ENCODE measurements at regions of chr1 and their contacts with region 1.

Region 1: GRCh38 chr1:67561704-67562113 is 123.3 kb upstream of the GADD45A start:
- DNase-seq: peak; percentile 87
- H3K4me3 ChIP-seq: no peak overlapping the region
- H3K27ac ChIP-seq: no peak overlapping the region
- H3K4me1 ChIP-seq: peaks cover 10% of the 10 kb centered on the region
- H3K27me3 ChIP-seq: no peaks in the 10 kb centered on the region

Region 2: GRCh38 chr1:66360285-66360724 is 1201.4 kb before region 1 on chr1:
- in situ Hi-C with region 1: no loop called
- DNase-seq: no peak
- H3K4me3 ChIP-seq: no peak overlapping the region
- H3K27ac ChIP-seq: peak overlapping the region; percentile 13
- H3K4me1 ChIP-seq: peaks cover 39% of the 10 kb centered on the region
- H3K27me3 ChIP-seq: no peaks in the 10 kb centered on the region

Region 3: GRCh38 chr1:67685067-67685557 is 123.4 kb after region 1 on chr1 and contains the start of gene GADD45A:
- in situ Hi-C with region 1: loop called (anchors 10 kb)
- DNase-seq: peak; percentile 99
- H3K4me3 ChIP-seq: peak within 1 kb of the TSS; percentile 96
- H3K27ac ChIP-seq: peak within 1 kb of the TSS; percentile 97
- H3K4me1 ChIP-seq: peaks cover 49% of the 10 kb centered on the region
- H3K27me3 ChIP-seq: no peaks in the 10 kb centered on the region
- total RNA-seq, gene GADD45A: 59.4 and 72.8 TPM in 2 replicates

Region 4: DNA sequence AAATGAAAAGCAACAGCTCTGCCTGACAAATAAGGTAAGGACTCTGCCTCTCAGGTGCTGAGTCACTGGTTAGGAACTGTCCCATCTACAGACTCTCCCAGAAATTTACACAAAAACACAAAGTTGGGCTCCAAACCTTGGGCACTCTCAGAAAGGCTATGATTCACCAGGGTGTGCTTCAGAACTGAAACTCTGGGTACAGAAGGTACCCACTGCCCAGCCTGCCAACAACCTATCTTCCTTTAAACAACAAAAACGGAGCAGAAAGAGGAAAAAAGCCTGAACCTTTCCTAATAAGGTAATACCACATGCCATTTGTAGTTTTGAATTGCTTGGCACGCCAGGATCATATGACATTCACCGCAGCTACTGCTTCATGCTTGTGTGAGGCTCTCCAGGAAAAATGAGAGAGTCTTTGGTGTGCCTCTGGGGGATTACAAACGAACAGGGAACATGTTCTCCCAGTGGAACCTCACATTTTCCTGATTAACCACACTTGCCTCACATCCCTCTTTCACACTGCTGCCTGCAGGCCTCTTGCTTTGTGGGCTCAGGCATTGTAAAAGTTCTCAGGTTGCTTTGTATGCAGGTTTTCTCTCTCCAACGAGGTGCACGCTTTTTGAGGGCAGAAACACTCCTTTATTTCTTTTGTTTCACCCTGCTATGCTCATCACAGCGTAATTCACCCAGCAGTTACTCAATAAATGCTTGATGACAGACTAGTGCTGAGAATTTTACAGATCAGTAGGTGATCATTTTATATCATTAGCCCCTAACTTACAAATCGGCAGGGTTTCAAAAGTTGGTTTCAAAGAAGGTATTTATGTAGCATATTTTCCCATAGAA is 188.4 kb after region 1 on chr1:
- in situ Hi-C with region 1: loop called (anchors 10 kb)
- DNase-seq: peak; percentile 91
- H3K4me3 ChIP-seq: peak overlapping the region; percentile 50
- H3K27ac ChIP-seq: peak overlapping the region; percentile 86
- H3K4me1 ChIP-seq: peaks cover 77% of the 10 kb centered on the region
- H3K27me3 ChIP-seq: no peaks in the 10 kb centered on the region

Measured in GM23248 (cell line).